ENCODE measurements at regions of chr15 and their contacts with region 1.

Region 1: DNA sequence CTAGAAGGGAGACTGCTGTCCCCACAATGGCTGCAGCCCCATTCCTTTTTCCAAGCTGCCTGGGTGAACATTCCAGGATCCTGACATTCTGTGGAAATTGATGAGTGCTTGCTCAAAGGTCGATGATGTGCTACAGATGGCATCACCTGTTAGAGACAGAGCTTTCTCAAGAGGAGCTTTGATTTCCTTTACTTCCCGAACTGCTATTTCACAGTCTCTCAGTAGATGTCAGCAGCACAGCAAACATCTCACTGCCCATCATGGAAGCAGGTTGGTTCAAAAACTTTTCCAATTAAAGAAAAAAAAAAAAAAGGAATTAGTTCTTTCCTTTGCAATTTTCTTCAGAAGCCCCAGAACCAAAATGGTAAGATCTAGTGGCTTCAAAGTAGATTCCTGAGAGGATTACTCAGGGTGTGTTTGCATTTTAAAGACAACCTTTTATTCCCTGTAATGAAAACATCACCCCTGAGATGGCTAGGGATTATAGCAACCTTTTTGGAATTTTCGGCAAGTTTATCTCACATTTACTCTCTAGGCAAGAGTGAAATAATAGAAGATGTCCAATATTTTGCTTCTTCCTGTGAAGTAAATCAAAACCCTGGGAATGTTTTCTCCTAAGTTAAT is 44.8 kb downstream of the POLR2M start:
- DNase-seq: peak; percentile 48
- H3K4me3 ChIP-seq: no peak overlapping the region
- H3K27ac ChIP-seq: no peak overlapping the region
- H3K4me1 ChIP-seq: no peaks in the 10 kb centered on the region; a peak in 1 of 4 replicates
- H3K27me3 ChIP-seq: no peaks in the 10 kb centered on the region
- CTCF ChIP-seq: peak; percentile 62
- EP300 ChIP-seq: no peak
- RAD21 ChIP-seq: peak; percentile 85

Region 2: GRCh38 chr15:57675481-57676181 is 75.7 kb before region 1 on chr15:
- CTCF ChIA-PET with region 1: no interaction called
- POLR2A ChIA-PET with region 1: no interaction called
- DNase-seq: no peak
- H3K4me3 ChIP-seq: no peak overlapping the region
- H3K27ac ChIP-seq: peak overlapping the region in 1 of 2 experiments; percentile 28; a peak in 1 of 4 replicates
- H3K4me1 ChIP-seq: peaks cover 0 to 3% of the 10 kb centered on the region in 2 experiments; a peak in 1 of 4 replicates
- H3K27me3 ChIP-seq: no peaks in the 10 kb centered on the region
- CTCF ChIP-seq: no peak
- EP300 ChIP-seq: no peak
- RAD21 ChIP-seq: no peak

Region 3: GRCh38 chr15:57769266-57769665 is 18.0 kb after region 1 on chr15:
- CTCF ChIA-PET with region 1: interaction called, 40 read pairs
- POLR2A ChIA-PET with region 1: no interaction called
- DNase-seq: no peak
- H3K4me3 ChIP-seq: no peak overlapping the region
- H3K27ac ChIP-seq: no peak overlapping the region
- H3K4me1 ChIP-seq: peaks cover 0 to 3% of the 10 kb centered on the region in 2 experiments; a peak in 1 of 4 replicates
- H3K27me3 ChIP-seq: no peaks in the 10 kb centered on the region; the same call in 1 of the 2 replicates
- CTCF ChIP-seq: no peak
- EP300 ChIP-seq: no peak
- RAD21 ChIP-seq: no peak

Region 4: GRCh38 chr15:57866149-57866736 is 115.0 kb after region 1 on chr15:
- CTCF ChIA-PET with region 1: interaction called, 315 read pairs
- POLR2A ChIA-PET with region 1: no interaction called
- DNase-seq: peak; percentile 42
- H3K4me3 ChIP-seq: peak overlapping the region in 1 of 2 experiments; percentile 51; a peak in 1 of 4 replicates
- H3K27ac ChIP-seq: no peak overlapping the region
- H3K4me1 ChIP-seq: no peaks in the 10 kb centered on the region
- H3K27me3 ChIP-seq: no peaks in the 10 kb centered on the region
- CTCF ChIP-seq: peak; percentile 70
- EP300 ChIP-seq: no peak
- RAD21 ChIP-seq: peak; percentile 69

Region 5: GRCh38 chr15:58043192-58043903 is 292.1 kb after region 1 on chr15:
- CTCF ChIA-PET with region 1: interaction called, 13 read pairs
- POLR2A ChIA-PET with region 1: no interaction called
- DNase-seq: no peak
- H3K4me3 ChIP-seq: no peak overlapping the region
- H3K27ac ChIP-seq: no peak overlapping the region
- H3K4me1 ChIP-seq: no peaks in the 10 kb centered on the region
- H3K27me3 ChIP-seq: no peaks in the 10 kb centered on the region; the same call in 1 of the 2 replicates
- CTCF ChIP-seq: peak; percentile 83
- EP300 ChIP-seq: no peak
- RAD21 ChIP-seq: peak; percentile 52